Head of caudate nucleus (tissue), 42 donors: ENCODE measurements at regions of chr15 and their contacts with region 1.

Region 1: GRCh38 chr15:65101411-65101890 is 13.5 kb downstream of the UBAP1L start:
- DNase-seq: peak; percentile 47 to 86 (median 72)

Region 2: GRCh38 chr15:65054333-65055200 is 46.9 kb before region 1 on chr15:
- intact Hi-C with region 1: loop called (anchors 10 kb)
- DNase-seq: peak; percentile 40 to 92 (median 82)